Panc1 (cell line): ENCODE measurements at regions of chr13 and their contacts with region 1.

Region 1: DNA sequence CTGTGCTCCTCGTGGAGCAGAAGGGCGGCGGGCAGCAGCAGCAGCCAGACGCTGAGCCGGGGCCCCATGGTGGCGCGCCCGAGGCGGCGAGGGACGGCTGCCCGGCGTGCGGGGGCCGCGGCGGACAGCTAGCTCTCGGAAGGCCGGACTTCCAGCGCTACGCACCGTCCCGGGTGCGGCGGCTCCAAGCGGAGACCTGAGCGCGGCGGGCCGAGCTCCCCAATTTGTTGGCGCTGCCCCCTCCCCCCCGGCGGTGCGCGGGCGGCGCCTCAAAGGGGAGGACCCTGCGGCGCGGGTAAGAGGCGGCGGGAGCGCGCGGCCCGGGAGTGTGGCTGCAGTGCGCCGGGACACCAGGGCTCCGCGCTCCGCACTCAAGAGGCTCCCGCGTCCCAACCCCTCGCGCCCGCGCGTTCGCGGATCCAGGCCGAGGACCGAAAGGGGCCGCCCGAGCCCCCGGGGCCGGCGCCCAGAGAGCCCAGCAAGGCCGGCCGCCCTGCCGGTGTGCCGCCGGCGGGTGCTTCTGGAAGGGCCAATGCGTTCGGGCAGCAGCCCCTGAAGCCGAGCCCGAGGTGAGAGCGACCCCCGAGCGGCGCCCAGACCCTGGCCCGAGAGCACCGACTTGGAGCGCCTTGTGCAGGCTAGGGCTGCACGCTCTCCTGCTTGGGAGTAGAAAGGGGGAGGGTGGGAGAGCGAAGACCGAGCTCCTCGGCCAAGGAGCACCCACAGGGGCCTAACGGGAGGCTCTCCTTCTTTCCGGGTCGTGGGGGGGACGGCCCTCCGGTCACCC is at the starts of genes COL4A1 and COL4A2:
- DNase-seq: no peak
- ATAC-seq: peak; percentile 64
- H3K4me3 ChIP-seq: peak within 1 kb of the TSS; percentile 37 to 42
- H3K27ac ChIP-seq: no peak within 1 kb of the TSS
- H3K4me1 ChIP-seq: no peaks in the 10 kb centered on the region
- H3K27me3 ChIP-seq: peaks cover 9% of the 10 kb centered on the region
- CTCF ChIP-seq: no peak
- total RNA-seq, gene COL4A1: 1.1 TPM
- total RNA-seq, gene COL4A2: 3.0 TPM

Region 2: GRCh38 chr13:110294624-110295023 is 12.5 kb before region 1 on chr13:
- CTCF ChIA-PET with region 1: no interaction called
- POLR2A ChIA-PET with region 1: interaction called, 10 read pairs
- in situ Hi-C with region 1: no loop called
- intact Hi-C with region 1: no loop called
- DNase-seq: no peak
- ATAC-seq: no peak
- H3K4me3 ChIP-seq: no peak overlapping the region
- H3K27ac ChIP-seq: no peak overlapping the region
- H3K4me1 ChIP-seq: no peaks in the 10 kb centered on the region
- H3K27me3 ChIP-seq: no peaks in the 10 kb centered on the region; the same call in 1 of the 2 replicates
- CTCF ChIP-seq: no peak

Region 3: DNA sequence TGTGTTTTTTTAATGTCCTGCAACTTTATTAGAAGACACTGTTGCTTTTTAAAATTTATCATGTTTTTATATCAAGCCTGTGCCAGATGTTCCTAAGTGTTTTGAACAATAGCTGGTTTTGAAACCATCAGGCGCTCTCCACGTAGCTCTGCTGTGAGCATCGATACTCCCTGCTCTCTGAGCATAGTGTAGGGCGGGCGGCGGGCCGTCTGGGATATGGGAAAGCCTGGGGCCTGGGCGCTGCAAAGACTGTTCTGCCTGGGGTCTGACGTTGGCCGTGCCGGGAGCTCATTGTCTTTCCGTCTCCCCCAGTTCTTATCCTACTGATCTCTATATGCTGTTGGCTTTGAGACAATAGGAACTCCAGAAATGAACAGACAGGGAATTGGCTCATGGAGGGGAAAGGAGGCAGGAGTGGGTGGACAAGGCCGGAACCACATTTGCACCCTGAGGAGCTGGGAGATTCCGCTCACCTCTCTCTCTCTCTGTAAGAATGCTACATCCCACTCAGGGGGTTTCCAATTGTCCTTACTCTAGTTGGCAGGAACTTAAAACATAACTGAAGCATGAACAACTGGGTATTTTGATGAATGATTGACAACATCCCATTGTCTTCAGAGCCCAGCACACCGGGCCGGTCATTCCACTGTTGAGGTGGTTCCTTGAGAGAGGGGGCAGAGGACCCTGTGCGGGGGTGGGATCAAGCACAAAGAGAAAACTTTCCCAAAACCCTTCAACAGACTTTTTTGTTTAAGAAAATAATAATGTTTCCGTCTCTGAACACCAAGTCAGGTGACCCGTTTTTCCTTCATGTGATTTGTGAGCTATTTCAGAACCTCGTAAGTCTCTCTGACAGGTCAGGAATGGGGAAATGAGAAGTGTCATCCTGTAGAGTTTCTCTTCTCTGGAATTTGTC is 64.7 kb after region 1 on chr13:
- CTCF ChIA-PET with region 1: no interaction called
- POLR2A ChIA-PET with region 1: no interaction called
- in situ Hi-C with region 1: no loop called
- intact Hi-C with region 1: no loop called
- DNase-seq: no peak
- ATAC-seq: no peak
- H3K4me3 ChIP-seq: no peak overlapping the region
- H3K27ac ChIP-seq: no peak overlapping the region
- H3K4me1 ChIP-seq: no peaks in the 10 kb centered on the region
- H3K27me3 ChIP-seq: no peaks in the 10 kb centered on the region; the same call in 1 of the 2 replicates
- CTCF ChIP-seq: no peak